ENCODE measurements at regions of chr2 and their contacts with region 1.

Region 1: GRCh38 chr2:74482801-74483674 is at the starts of genes CCDC142 and TTC31:
- DNase-seq: peak; percentile 94
- H3K4me3 ChIP-seq: peak within 1 kb of the TSS; percentile 59 to 75 (median 75)
- H3K27ac ChIP-seq: peak within 1 kb of the TSS; percentile 71
- H3K4me1 ChIP-seq: peaks cover 27% of the 10 kb centered on the region
- H3K27me3 ChIP-seq: no peaks in the 10 kb centered on the region
- CTCF ChIP-seq: peak; percentile 91 to 94
- total RNA-seq, gene CCDC142: 13.0 to 18.2 TPM
- total RNA-seq, gene TTC31: 11.5 to 22.0 TPM

Region 2: GRCh38 chr2:74472086-74472944 is 10.7 kb before region 1 on chr2 and contains the start of gene MRPL53:
- CTCF ChIA-PET with region 1: interaction called, 5 read pairs
- dilution Hi-C with region 1: no loop called
- in situ Hi-C with region 1: no loop called
- intact Hi-C with region 1: loop called (anchors 1 kb)
- DNase-seq: peak; percentile 89
- H3K4me3 ChIP-seq: peak within 1 kb of the TSS; percentile 52 to 79 (median 67)
- H3K27ac ChIP-seq: peak within 1 kb of the TSS; percentile 85
- H3K4me1 ChIP-seq: peaks cover 14% of the 10 kb centered on the region
- H3K27me3 ChIP-seq: no peaks in the 10 kb centered on the region
- CTCF ChIP-seq: no peak
- total RNA-seq, gene MRPL53: 9.3 to 70.1 TPM

Region 3: DNA sequence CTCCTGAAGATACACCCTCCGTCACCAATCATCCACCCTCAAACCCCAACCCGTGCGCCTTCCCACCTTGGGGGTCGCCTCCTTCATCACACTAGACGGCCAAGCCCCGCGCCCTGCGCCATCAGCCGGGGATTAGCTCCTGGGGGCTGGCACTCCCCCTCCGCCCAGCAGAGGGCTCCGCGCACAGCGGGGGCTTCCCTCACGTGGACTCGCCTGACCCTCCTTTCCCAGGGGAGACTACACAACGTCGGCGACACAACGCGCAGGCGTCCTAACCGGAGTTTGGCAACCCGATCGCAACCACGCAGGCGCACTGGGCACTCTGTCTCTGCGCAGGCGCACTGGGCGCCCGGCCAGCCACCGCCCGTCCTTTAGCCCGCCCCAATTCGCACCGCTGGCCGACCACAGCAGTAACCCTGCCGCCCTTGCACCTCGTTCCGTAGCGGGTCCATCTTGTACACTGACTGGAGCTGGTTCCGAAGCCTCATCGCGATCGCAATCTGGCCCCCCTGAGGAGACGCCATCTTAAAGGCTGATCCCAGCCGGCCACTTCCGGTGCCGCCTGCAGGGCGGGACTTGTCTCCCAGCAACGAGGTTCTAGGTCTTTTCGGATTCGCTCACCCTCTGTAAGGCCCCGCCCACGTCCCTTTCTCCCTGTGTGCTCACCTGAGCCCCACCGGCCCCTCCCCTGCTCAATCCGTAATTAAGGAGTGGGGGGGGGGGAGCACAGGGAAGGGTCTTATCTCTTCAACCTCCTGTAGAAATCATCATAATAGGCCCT is 24.3 kb after region 1 on chr2 and contains the start of gene PCGF1:
- CTCF ChIA-PET with region 1: no interaction called
- dilution Hi-C with region 1: no loop called
- in situ Hi-C with region 1: no loop called
- intact Hi-C with region 1: loop called (anchors 2 kb)
- DNase-seq: peak; percentile 95
- H3K4me3 ChIP-seq: peak within 1 kb of the TSS; percentile 81 to 100 (median 90)
- H3K27ac ChIP-seq: peak within 1 kb of the TSS; percentile 86
- H3K4me1 ChIP-seq: peaks cover 36% of the 10 kb centered on the region
- H3K27me3 ChIP-seq: no peaks in the 10 kb centered on the region
- CTCF ChIP-seq: peak; percentile 11 to 13
- total RNA-seq, gene PCGF1: 20.0 to 35.4 TPM

Measured in mammary epithelial cell (primary cell).